Common myeloid progenitor, CD34-positive (primary cell): ENCODE measurements at regions of chr11 and their contacts with region 1.

Region 1: DNA sequence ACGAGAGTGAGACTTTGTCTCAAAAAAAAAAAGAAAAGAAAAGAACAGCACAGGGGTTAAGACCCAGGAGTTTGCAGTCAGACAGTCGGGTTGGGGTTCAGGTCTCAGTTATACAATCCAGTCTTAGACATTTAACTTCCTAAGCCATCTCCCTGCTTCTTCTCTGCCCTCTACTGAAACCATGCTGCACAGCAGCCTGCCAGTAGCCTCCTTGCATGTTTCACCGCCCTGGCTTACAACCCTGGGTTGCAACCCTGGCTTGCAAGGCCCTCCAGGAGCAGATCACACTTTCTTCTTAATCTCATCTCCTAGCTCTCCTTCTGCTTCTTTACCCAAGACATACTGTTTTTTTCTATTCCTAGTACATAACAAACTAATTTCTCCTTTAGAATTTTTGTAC is 5.9 kb upstream of the B3GAT3 start:
- DNase-seq: peak in 2 of 3 donors; percentile 58 to 62
- H3K4me3 ChIP-seq: no peak overlapping the region
- H3K27ac ChIP-seq: no peak overlapping the region
- H3K4me1 ChIP-seq: peaks cover 0 to 14% (median 11%) of the 10 kb centered on the region in 4 experiments
- H3K27me3 ChIP-seq: no peaks in the 10 kb centered on the region

Region 2: GRCh38 chr11:62599901-62600300 is 27.8 kb before region 1 on chr11:
- CTCF ChIA-PET with region 1: no interaction called
- POLR2A ChIA-PET with region 1: no interaction called
- DNase-seq: no peak
- H3K4me3 ChIP-seq: peak overlapping the region in 6 of 7 experiments; percentile 71 to 97 (median 94)
- H3K27ac ChIP-seq: peak overlapping the region; percentile 85 to 94
- H3K4me1 ChIP-seq: peaks cover 18 to 43% (median 32%) of the 10 kb centered on the region in 4 experiments
- H3K27me3 ChIP-seq: no peaks in the 10 kb centered on the region

Region 3: DNA sequence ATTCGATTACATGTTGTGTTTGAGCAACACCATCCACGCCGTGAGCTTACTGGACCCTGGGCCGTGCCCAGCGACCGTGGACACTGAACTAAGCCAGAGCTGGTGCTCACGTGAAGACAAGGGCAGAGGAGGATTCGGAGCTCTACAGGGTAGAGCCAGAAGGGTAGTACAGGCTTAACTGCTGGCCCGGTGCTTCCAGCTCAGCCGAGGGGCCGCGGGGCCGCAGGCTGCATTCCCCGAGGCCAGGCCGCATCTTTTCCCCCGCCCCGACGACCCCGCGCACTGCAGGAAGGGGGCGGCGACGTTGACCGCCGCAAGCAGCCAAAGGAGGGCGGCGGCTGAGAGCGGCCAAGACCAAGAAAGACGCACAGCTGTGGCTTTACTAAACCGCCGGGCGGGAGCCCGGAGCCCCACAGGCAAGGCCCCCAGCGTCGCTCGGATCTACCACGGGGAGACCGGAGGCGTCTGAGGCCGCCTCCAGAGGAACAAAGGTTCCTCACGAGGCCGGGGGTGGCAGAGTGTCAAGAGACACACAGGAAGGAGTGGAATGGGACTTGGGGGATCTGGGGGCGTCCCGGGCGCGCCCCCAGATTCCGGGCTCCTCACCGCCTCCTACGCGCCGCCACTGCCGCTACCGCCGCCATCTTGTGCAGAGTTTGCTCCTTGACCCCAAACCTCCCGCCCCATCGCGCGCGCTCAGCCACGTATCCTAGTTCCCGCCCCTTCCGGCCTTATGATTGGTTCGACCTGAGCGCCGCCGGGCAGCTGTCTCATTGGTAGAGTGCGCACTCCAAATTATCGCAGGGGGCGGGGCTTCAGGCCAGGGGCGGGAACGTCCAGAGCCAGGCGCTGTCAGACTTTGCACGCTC is 18.5 kb after region 1 on chr11 and contains the start of gene GANAB:
- CTCF ChIA-PET with region 1: interaction called, 12 read pairs
- POLR2A ChIA-PET with region 1: no interaction called
- DNase-seq: peak; percentile 98 to 99 (median 99)
- H3K4me3 ChIP-seq: peak within 1 kb of the TSS; percentile 81 to 100 (median 92)
- H3K27ac ChIP-seq: peak within 1 kb of the TSS; percentile 93 to 97
- H3K4me1 ChIP-seq: peaks cover 0 to 25% (median 21%) of the 10 kb centered on the region in 4 experiments
- H3K27me3 ChIP-seq: no peaks in the 10 kb centered on the region

Region 4: DNA sequence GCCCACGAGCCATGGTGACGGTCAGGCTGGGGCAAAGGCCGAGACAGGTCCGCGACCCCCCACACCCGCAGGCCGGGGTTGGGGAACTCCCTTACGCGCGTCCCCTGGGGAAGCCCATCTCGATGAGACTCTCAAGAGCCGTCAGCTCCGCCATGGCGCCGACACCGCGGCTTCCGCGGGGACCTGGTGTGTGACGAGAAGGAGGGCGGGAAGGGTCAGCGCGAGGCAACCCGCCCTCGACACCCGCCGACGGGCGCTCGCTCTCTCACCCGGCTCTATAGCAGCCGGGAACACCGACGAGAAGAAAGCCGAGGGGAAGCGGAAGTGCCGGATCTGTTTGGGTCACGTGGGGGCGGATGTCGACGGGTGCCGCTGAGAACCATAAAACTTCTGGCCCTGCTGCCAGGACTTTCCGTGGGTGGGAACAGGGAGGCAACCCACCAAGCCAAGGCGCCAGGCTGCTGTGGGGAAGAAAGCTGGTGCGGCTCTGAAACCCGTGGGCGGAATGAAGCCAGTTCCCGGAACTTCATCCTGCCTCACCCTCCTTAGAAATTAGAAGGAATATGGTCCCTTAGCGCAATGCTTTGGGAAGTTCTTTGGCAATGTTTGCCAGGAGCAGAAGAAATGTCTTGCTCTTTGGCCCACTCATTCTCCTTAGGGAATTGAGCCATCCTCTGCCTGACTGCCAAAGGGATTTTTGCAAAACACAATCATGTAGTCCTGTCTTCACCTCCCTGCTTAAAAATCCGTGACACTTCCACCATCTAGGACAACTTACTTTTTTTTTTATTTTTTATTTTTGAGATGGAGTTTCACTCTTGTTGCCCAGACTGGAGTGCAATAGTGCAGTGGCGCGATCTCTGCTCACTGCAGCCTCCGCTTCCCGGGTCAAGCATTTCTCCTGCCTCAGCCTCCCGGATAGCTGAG is 51.3 kb after region 1 on chr11 and contains the start of gene UBXN1:
- CTCF ChIA-PET with region 1: no interaction called
- POLR2A ChIA-PET with region 1: no interaction called
- DNase-seq: peak; percentile 90 to 92 (median 90)
- H3K4me3 ChIP-seq: peak within 1 kb of the TSS; percentile 71 to 96 (median 90)
- H3K27ac ChIP-seq: peak within 1 kb of the TSS; percentile 93 to 96
- H3K4me1 ChIP-seq: peaks cover 2 to 26% (median 16%) of the 10 kb centered on the region in 4 experiments
- H3K27me3 ChIP-seq: no peaks in the 10 kb centered on the region